ENCODE measurements at regions of chr11 and their contacts with region 1.

Region 1: GRCh38 chr11:14454861-14455632 is 44.6 kb downstream of the COPB1 start:
- DNase-seq: no peak
- ATAC-seq: peak; percentile 58
- H3K4me3 ChIP-seq: no peak overlapping the region
- H3K4me1 ChIP-seq: no peaks in the 10 kb centered on the region
- CTCF ChIP-seq: no peak

Region 2: DNA sequence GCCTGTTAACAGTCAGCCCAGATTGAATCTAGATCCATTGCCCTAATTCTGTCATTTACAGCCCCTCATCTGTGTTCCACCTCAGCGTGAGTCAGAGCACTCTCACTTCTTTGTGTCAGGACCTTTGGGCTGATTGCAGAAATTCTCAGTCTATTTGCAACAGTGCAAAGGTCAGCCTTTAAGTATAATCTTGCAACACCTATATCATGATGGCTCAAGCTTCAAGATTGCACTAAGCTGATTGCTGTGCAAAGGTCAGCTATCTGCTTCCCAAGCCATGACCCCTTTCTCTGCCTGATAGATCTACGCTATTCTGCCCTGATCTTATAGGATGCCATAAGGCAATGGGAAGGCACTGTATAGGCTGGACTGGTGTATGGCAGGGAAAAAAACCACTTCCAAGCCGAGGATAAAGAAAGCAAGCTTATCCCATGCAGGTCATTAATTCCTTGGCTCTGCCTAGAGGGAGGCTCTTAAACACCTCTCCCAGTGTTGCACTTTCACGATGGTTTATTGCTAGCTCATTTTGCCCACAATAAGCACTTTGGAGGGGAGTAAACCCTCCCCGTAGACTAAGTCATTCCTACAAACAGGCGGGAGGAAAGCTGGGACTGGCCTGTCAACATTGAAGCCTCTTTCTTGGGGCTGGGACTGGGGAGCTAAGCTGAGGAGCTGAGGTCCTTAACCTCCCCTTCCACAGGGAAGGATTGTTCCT is 196.7 kb before region 1 on chr11:
- intact Hi-C with region 1: no loop called
- DNase-seq: peak in 1 of 3 donors; percentile 65
- ATAC-seq: peak; percentile 91
- H3K4me3 ChIP-seq: no peak overlapping the region
- H3K4me1 ChIP-seq: peaks cover 18% of the 10 kb centered on the region
- CTCF ChIP-seq: no peak

Region 3: GRCh38 chr11:14300661-14301304 is 154.3 kb before region 1 on chr11:
- intact Hi-C with region 1: loop called (anchors 5 kb)
- DNase-seq: peak in 1 of 3 donors; percentile 67
- ATAC-seq: peak; percentile 94
- H3K4me3 ChIP-seq: no peak overlapping the region
- H3K4me1 ChIP-seq: no peaks in the 10 kb centered on the region
- CTCF ChIP-seq: peak; percentile 49

Region 4: GRCh38 chr11:14336507-14337503 is 118.2 kb before region 1 on chr11:
- intact Hi-C with region 1: no loop called
- DNase-seq: no peak
- ATAC-seq: peak; percentile 73
- H3K4me3 ChIP-seq: no peak overlapping the region
- H3K4me1 ChIP-seq: no peaks in the 10 kb centered on the region
- CTCF ChIP-seq: no peak

Region 5: GRCh38 chr11:14380947-14381561 is 74.0 kb before region 1 on chr11:
- intact Hi-C with region 1: no loop called
- DNase-seq: peak; percentile 69 to 81 (median 74)
- ATAC-seq: peak; percentile 93
- H3K4me3 ChIP-seq: no peak overlapping the region
- H3K4me1 ChIP-seq: peaks cover 4% of the 10 kb centered on the region
- CTCF ChIP-seq: no peak